ENCODE measurements at regions of chr10 and their contacts with region 1.

Region 1: GRCh38 chr10:79038841-79039201 is 29.9 kb upstream of the ZMIZ1 start:
- DNase-seq: no peak
- H3K4me3 ChIP-seq: no peak overlapping the region
- CTCF ChIP-seq: no peak

Region 2: GRCh38 chr10:78357141-78358063 is 681.4 kb before region 1 on chr10:
- in situ Hi-C with region 1: loop called (anchors 10 kb)
- DNase-seq: no peak
- H3K4me3 ChIP-seq: no peak overlapping the region
- CTCF ChIP-seq: no peak

Region 3: DNA sequence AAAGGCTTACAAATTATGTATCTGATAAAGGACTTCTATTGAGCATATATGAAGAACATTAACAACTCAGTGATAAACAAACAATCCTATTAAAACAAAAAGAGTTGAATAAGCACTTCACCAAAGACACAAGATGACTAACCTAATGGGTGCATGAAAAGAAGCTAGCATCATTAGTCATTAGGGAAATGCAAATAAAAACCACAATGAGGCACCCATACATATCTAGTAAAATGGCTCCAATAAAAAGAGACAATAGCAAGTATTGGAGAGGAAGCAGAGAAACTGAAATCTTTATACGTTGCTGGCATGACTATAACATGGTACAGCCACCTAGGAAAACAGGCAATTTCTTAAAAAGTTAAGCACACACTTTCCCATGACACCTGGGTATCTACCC is 47.6 kb before region 1 on chr10:
- in situ Hi-C with region 1: no loop called
- DNase-seq: no peak
- H3K4me3 ChIP-seq: no peak overlapping the region
- CTCF ChIP-seq: no peak